ENCODE measurements at regions of chr15 and their contacts with region 1.

Region 1: GRCh38 chr15:40108855-40109735 is at the start of gene BMF:
- DNase-seq: peak; percentile 85
- H3K4me3 ChIP-seq: peak within 1 kb of the TSS; percentile 73
- H3K27me3 ChIP-seq: peaks cover 7% of the 10 kb centered on the region
- CTCF ChIP-seq: peak; percentile 45
- polyA plus RNA-seq, gene BMF: 5.8 and 8.3 TPM in 2 replicates

Region 2: GRCh38 chr15:40010686-40011085 is 98.4 kb before region 1 on chr15:
- CTCF ChIA-PET with region 1: no interaction called
- POLR2A ChIA-PET with region 1: no interaction called
- DNase-seq: no peak
- H3K4me3 ChIP-seq: no peak overlapping the region
- H3K27me3 ChIP-seq: no peaks in the 10 kb centered on the region
- CTCF ChIP-seq: no peak

Region 3: GRCh38 chr15:40044717-40045571 is 64.2 kb before region 1 on chr15:
- CTCF ChIA-PET with region 1: interaction called, 93 read pairs
- POLR2A ChIA-PET with region 1: no interaction called
- DNase-seq: no peak
- H3K4me3 ChIP-seq: no peak overlapping the region
- H3K27me3 ChIP-seq: no peaks in the 10 kb centered on the region
- CTCF ChIP-seq: peak; percentile 97

Region 4: GRCh38 chr15:40061212-40061901 is 47.7 kb before region 1 on chr15:
- CTCF ChIA-PET with region 1: interaction called, 11 read pairs
- POLR2A ChIA-PET with region 1: no interaction called
- DNase-seq: no peak
- H3K4me3 ChIP-seq: no peak overlapping the region
- H3K27me3 ChIP-seq: no peaks in the 10 kb centered on the region
- CTCF ChIP-seq: no peak

Region 5: DNA sequence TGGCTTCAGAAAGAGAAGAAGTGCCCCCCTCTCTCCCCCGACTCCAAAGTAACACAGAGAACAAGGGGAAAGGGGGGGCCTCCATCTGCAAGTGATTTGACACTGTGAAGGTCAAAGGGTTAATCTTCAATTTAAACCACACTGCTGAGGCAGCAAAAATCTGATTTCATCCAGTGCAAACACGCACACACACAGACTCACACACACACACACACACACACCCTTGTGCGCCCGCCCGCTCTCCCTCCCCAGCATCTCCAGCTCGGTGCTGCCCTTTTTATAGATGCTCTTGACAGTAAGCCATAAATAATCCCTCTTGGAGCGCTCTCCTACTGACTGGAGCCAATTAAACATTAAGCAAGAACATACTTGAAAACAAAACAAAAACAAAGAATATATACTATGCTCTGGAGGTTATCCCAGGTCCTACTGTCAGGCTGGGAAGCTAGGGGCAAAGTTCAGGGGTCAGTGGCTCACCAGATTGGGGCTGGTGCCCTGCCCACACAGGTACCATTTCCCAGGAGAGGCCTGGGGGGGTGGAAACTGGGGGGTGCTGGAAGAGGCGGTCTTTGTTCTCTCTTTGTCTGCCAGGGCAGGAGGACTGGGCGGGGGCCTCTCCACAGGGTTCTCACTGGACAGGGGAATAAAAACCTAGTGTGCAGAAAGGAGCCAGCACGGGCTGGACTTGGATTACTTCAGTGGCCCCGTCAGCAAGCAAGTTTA is 16.7 kb before region 1 on chr15:
- CTCF ChIA-PET with region 1: interaction called, 52 read pairs
- POLR2A ChIA-PET with region 1: no interaction called
- DNase-seq: peak; percentile 91
- H3K4me3 ChIP-seq: no peak overlapping the region
- H3K27me3 ChIP-seq: no peaks in the 10 kb centered on the region
- CTCF ChIP-seq: no peak

Region 6: GRCh38 chr15:40160689-40161688 is 51.9 kb after region 1 on chr15 and contains the start of gene BUB1B:
- CTCF ChIA-PET with region 1: interaction called, 14 read pairs
- POLR2A ChIA-PET with region 1: no interaction called
- DNase-seq: peak; percentile 60
- H3K4me3 ChIP-seq: peak within 1 kb of the TSS; percentile 84
- H3K27me3 ChIP-seq: no peaks in the 10 kb centered on the region; the same call in 1 of the 2 replicates
- CTCF ChIP-seq: no peak
- polyA plus RNA-seq, gene BUB1B: 12.8 and 16.6 TPM in 2 replicates

Region 7: GRCh38 chr15:40192942-40193341 is 83.8 kb after region 1 on chr15:
- CTCF ChIA-PET with region 1: no interaction called
- POLR2A ChIA-PET with region 1: no interaction called
- DNase-seq: peak; percentile 9
- H3K4me3 ChIP-seq: no peak overlapping the region
- H3K27me3 ChIP-seq: no peaks in the 10 kb centered on the region
- CTCF ChIP-seq: no peak